ENCODE measurements at regions of chr6 and their contacts with region 1.

Region 1: DNA sequence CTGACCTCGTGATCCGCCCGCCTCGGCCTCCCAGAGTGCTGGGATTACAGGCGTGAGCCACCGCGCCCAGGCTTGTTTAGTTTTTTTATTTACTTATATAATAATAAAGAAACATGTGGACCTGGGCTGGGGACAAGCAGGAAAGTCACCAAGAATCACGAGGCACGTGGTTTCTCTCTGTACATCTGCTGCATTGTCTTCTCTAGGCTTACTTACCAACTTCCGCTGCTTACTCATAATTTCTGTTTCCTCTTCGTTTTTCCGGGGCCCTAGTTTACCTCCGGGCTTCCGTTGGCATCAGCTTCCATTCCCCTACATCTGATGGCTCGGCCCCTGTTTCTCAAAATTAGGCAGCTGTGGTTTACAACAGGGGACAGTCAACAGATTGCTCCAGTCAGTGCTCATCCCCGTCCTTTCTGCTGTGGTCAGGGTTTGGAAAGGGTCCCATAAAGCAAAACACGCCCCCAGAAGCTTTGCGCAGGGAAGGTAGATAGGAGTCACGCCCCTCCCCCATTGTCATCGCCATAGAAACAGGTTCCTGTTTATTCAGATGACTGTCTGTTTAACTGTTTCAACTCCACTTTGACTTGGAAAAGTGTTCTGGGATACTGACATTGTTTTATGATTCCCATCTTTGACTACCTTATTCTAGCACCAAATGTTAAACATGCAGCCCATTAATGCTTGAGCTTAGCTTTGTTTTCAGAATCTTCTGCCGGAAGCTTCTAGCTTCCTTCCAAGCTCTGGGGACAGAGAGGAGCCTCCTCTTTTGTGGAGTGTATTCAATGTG is 31.9 kb upstream of the TXLNB start:
- DNase-seq: peak; percentile 84
- ATAC-seq: peak; percentile 87
- H3K4me3 Mint-ChIP-seq: peak overlapping the region; percentile 66
- H3K27ac Mint-ChIP-seq: peak overlapping the region; percentile 94
- H3K4me1 Mint-ChIP-seq: peaks cover 32% of the 10 kb centered on the region
- H3K27me3 Mint-ChIP-seq: no peaks in the 10 kb centered on the region

Region 2: GRCh38 chr6:139250296-139251044 is 73.2 kb before region 1 on chr6:
- CTCF ChIA-PET with region 1: no interaction called
- POLR2A ChIA-PET with region 1: no interaction called
- intact Hi-C with region 1: loop called in 1 of 2 experiments (anchors 2 kb)
- DNase-seq: peak; percentile 76
- ATAC-seq: peak; percentile 83
- H3K4me3 Mint-ChIP-seq: no peak overlapping the region
- H3K27ac Mint-ChIP-seq: peak overlapping the region; percentile 76
- H3K4me1 Mint-ChIP-seq: peaks cover 52% of the 10 kb centered on the region
- H3K27me3 Mint-ChIP-seq: no peaks in the 10 kb centered on the region

Region 3: GRCh38 chr6:139308286-139308916 is 15.3 kb before region 1 on chr6:
- CTCF ChIA-PET with region 1: interaction called, 3 read pairs
- POLR2A ChIA-PET with region 1: interaction called, 4 read pairs
- intact Hi-C with region 1: loop called in 1 of 2 experiments (anchors 1 kb)
- DNase-seq: no peak
- ATAC-seq: peak; percentile 82
- H3K4me3 Mint-ChIP-seq: no peak overlapping the region
- H3K27ac Mint-ChIP-seq: peak overlapping the region; percentile 87
- H3K4me1 Mint-ChIP-seq: peaks cover 29% of the 10 kb centered on the region
- H3K27me3 Mint-ChIP-seq: no peaks in the 10 kb centered on the region

Measured in activated CD4-positive, alpha-beta T cell treated with anti-CD3 and anti-CD28 coated beads for 36 hours (primary cell).